Posterior vena cava (tissue), 2 donors: ENCODE measurements at regions of chr17 and their contacts with region 1.

Region 1: GRCh38 chr17:72407336-72407909 is 286.6 kb downstream of the SOX9 start:
- DNase-seq: peak; percentile 83

Region 2: DNA sequence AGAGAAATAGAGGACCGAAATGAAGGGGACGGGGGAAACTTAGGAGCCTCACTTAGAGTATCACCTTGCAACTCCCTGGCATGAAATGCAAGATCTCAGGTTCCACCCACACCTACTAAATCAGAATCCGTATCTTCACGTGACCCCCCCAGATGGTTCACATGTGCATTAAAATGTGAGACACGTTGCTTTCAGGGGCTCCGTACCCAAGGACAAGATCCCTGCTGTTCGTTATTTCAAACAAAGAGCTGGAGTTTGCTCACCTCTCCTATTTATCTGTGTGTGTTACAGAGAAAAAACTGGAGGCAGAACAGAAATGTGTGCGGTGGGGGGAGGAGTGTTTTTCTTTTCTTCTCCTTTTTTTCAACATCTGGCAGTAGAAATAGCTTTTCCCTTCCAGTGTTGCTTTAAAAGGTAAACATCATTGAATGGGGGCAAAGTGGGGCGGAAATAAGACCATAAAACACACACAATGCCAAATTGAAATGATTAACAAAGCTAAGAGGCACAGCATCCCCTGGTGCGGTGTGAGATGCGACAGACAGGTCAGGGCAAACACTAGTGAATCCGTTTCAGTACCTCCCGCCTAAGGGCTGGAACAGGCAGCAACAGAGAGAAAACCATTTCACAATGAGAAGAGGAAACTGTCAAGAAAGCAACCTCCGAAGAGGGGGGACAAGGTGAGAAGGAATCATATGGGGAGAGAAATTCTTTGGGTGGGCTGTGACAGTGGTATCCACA is 141.1 kb before region 1 on chr17:
- intact Hi-C with region 1: no loop called
- DNase-seq: no peak

Region 3: GRCh38 chr17:72373910-72374741 is 33.3 kb before region 1 on chr17:
- intact Hi-C with region 1: no loop called
- DNase-seq: peak; percentile 58

Region 4: GRCh38 chr17:72465191-72466024 is 58.0 kb after region 1 on chr17:
- intact Hi-C with region 1: loop called in 1 of 2 experiments (anchors 10 kb)
- DNase-seq: no peak